ENCODE measurements at regions of chr9 and their contacts with region 1.

Region 1: GRCh38 chr9:121992571-121993212 is 100.4 kb downstream of the TTLL11 start:
- DNase-seq: peak; percentile 86
- H3K4me3 ChIP-seq: no peak overlapping the region
- H3K27ac ChIP-seq: no peak overlapping the region
- H3K4me1 ChIP-seq: no peaks in the 10 kb centered on the region
- H3K27me3 ChIP-seq: no peaks in the 10 kb centered on the region
- CTCF ChIP-seq: peak; percentile 86

Region 2: DNA sequence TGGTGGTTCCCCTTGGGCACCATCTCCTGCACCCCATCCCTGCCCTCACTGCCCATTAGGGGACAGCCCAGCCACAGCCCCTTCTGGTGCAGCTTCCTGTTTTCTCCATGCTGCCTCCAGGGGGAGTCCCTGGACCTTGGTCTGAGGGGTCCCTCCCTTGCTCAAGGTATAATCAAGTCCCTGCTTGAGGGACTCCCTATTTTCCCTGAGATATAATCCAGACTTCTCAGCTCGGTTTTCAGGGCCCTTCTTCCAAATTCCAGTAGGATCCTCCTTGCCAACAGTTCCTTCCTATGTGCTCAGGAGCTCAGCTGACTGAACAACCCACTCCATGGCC is 371.6 kb before region 1 on chr9:
- CTCF ChIA-PET with region 1: no interaction called
- POLR2A ChIA-PET with region 1: no interaction called
- intact Hi-C with region 1: loop called (anchors 5 kb)
- DNase-seq: peak; percentile 50
- H3K4me3 ChIP-seq: no peak overlapping the region
- H3K27ac ChIP-seq: no peak overlapping the region
- H3K4me1 ChIP-seq: no peaks in the 10 kb centered on the region
- H3K27me3 ChIP-seq: peaks cover 5% of the 10 kb centered on the region
- CTCF ChIP-seq: peak; percentile 63

Region 3: GRCh38 chr9:121634329-121635261 is 358.1 kb before region 1 on chr9:
- CTCF ChIA-PET with region 1: no interaction called
- POLR2A ChIA-PET with region 1: no interaction called
- intact Hi-C with region 1: loop called (anchors 5 kb)
- DNase-seq: no peak
- H3K4me3 ChIP-seq: no peak overlapping the region
- H3K27ac ChIP-seq: no peak overlapping the region
- H3K4me1 ChIP-seq: no peaks in the 10 kb centered on the region
- H3K27me3 ChIP-seq: no peaks in the 10 kb centered on the region
- CTCF ChIP-seq: peak; percentile 34; the same call in 1 of the 2 replicates

Region 4: GRCh38 chr9:121686930-121687541 is 305.7 kb before region 1 on chr9:
- CTCF ChIA-PET with region 1: no interaction called
- POLR2A ChIA-PET with region 1: no interaction called
- intact Hi-C with region 1: loop called (anchors 1 kb)
- DNase-seq: peak; percentile 73
- H3K4me3 ChIP-seq: no peak overlapping the region
- H3K27ac ChIP-seq: no peak overlapping the region
- H3K4me1 ChIP-seq: no peaks in the 10 kb centered on the region
- H3K27me3 ChIP-seq: no peaks in the 10 kb centered on the region
- CTCF ChIP-seq: peak; percentile 91

Region 5: GRCh38 chr9:121744002-121744686 is 248.5 kb before region 1 on chr9:
- CTCF ChIA-PET with region 1: no interaction called
- POLR2A ChIA-PET with region 1: no interaction called
- intact Hi-C with region 1: loop called (anchors 1 kb)
- DNase-seq: peak; percentile 44
- H3K4me3 ChIP-seq: no peak overlapping the region
- H3K27ac ChIP-seq: no peak overlapping the region
- H3K4me1 ChIP-seq: peaks cover 4% of the 10 kb centered on the region
- H3K27me3 ChIP-seq: no peaks in the 10 kb centered on the region
- CTCF ChIP-seq: peak; percentile 58

Region 6: DNA sequence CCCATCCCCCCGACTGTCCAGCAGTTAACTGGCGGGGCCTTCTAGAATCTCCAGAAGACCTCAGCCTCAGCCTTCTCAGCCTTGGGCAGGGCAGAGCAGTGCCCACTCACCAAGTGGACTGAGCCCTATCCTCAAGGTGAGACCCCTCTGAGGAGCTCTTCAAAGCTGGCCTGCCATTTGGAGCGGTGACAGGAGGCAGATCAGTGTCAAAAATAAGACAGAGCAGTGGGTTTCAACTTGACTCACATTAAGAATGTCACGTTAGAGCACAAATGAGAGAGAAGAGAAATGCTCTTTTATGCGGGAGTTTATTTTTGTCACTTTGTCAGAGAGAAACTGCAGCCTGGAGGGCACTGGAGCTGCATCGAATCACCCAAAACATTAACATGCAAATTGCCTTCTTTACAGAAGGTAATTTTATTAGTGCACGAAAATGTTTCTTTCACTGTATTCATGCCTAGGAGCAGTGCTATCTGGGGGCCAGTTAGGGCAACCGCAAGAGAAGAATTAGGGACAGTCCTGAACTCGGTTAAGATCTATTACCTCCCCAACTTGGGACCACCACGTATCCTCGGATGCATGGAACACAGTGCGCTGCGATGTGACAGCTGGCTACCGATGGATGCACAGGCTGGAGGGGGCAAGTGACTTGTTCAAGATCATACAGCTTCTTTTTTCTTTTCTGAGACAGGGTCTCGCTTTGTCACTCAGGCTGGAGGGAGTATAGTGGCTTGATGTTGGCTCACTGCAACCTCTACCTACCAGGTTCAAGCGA is 152.8 kb before region 1 on chr9:
- CTCF ChIA-PET with region 1: no interaction called
- POLR2A ChIA-PET with region 1: no interaction called
- intact Hi-C with region 1: loop called (anchors 5 kb)
- DNase-seq: no peak
- H3K4me3 ChIP-seq: no peak overlapping the region
- H3K27ac ChIP-seq: no peak overlapping the region
- H3K4me1 ChIP-seq: no peaks in the 10 kb centered on the region
- H3K27me3 ChIP-seq: no peaks in the 10 kb centered on the region
- CTCF ChIP-seq: no peak

Region 7: GRCh38 chr9:121895818-121896544 is 96.7 kb before region 1 on chr9:
- CTCF ChIA-PET with region 1: no interaction called
- POLR2A ChIA-PET with region 1: no interaction called
- intact Hi-C with region 1: no loop called
- DNase-seq: peak; percentile 44
- H3K4me3 ChIP-seq: no peak overlapping the region
- H3K27ac ChIP-seq: no peak overlapping the region
- H3K4me1 ChIP-seq: no peaks in the 10 kb centered on the region
- H3K27me3 ChIP-seq: no peaks in the 10 kb centered on the region
- CTCF ChIP-seq: no peak

Measured in A673 (cell line).